HCT116 (cell line): ENCODE measurements at regions of chr7 and their contacts with region 1.

Region 1: DNA sequence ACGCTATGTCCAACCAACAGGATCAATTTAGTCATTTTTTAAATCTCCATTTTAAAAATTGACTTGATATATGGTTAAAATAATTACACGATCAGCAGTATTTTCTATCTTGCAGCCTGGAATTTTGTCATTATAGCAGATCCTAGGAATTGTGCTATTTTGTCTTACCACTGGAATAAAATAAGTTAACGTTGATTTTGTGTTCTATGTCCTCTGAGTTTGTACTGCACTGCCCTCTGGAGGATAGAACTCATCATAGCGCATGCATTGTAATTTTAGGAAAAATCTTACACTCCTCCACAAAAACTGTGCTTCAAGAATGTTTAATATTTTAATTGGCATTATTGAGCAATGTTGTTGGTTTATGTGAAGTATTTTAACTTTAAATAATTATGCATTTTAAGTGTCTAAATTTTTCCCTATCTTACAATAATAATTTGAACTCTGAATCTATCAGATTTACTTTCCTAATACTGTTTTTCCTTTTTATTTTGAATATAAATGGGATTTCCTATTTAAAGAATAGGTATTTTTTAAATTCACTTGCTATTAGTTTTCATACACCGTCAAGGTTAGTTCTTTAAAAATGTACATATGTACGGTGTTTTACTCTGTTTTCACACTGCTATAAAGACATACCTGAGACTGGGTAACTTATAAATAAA is 220.1 kb downstream of the PPP1R3A start:
- DNase-seq: peak; percentile 23
- ATAC-seq: 0 out of 2 replicates have a peak, but pooled peaks have one; percentile 57
- H3K4me3 ChIP-seq: no peak overlapping the region
- H3K27ac ChIP-seq: no peak overlapping the region
- H3K4me1 ChIP-seq: no peaks in the 10 kb centered on the region
- H3K27me3 ChIP-seq: no peaks in the 10 kb centered on the region
- CTCF ChIP-seq: peak; percentile 47 to 83 (median 74); a peak in 5 of 6 replicates
- POLR2A ChIP-seq: no peak
- RAD21 ChIP-seq: peak; percentile 73

Region 2: DNA sequence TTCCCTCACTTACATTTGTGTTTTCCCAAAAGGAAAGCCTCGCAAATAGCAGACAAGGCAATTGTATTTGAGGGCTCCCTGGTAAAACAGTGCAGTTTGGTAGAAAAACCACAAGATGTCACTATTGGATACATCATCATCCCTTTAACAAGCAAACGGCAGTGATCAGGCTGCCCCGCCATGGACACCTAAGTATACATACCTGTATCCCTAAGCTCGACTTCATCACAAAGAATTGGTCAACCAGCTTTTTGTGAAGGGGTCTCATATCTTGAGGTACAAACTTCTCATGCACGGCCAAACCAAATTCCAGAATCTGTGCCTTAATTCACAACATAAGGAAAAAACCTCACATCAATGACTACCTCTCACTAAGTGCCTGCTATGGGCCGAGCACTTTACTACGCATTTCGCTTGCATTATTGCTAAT is 1956.9 kb before region 1 on chr7:
- CTCF ChIA-PET with region 1: no interaction called
- POLR2A ChIA-PET with region 1: no interaction called
- RAD21 ChIA-PET with region 1: no interaction called
- intact Hi-C with region 1: loop called (anchors 5 kb)
- DNase-seq: peak; percentile 75
- ATAC-seq: peak; percentile 96
- H3K4me3 ChIP-seq: no peak overlapping the region
- H3K27ac ChIP-seq: no peak overlapping the region
- H3K4me1 ChIP-seq: no peaks in the 10 kb centered on the region
- H3K27me3 ChIP-seq: no peaks in the 10 kb centered on the region
- CTCF ChIP-seq: peak; percentile 60 to 86 (median 81)
- POLR2A ChIP-seq: no peak
- RAD21 ChIP-seq: peak; percentile 85

Region 3: GRCh38 chr7:112550468-112551060 is 1148.1 kb before region 1 on chr7:
- CTCF ChIA-PET with region 1: no interaction called
- POLR2A ChIA-PET with region 1: no interaction called
- RAD21 ChIA-PET with region 1: no interaction called
- intact Hi-C with region 1: loop called (anchors 2 kb)
- DNase-seq: peak; percentile 56
- ATAC-seq: peak; percentile 89
- H3K4me3 ChIP-seq: no peak overlapping the region
- H3K27ac ChIP-seq: no peak overlapping the region
- H3K4me1 ChIP-seq: no peaks in the 10 kb centered on the region
- H3K27me3 ChIP-seq: no peaks in the 10 kb centered on the region
- CTCF ChIP-seq: peak; percentile 74 to 96 (median 84)
- POLR2A ChIP-seq: no peak
- RAD21 ChIP-seq: peak; percentile 92

Region 4: DNA sequence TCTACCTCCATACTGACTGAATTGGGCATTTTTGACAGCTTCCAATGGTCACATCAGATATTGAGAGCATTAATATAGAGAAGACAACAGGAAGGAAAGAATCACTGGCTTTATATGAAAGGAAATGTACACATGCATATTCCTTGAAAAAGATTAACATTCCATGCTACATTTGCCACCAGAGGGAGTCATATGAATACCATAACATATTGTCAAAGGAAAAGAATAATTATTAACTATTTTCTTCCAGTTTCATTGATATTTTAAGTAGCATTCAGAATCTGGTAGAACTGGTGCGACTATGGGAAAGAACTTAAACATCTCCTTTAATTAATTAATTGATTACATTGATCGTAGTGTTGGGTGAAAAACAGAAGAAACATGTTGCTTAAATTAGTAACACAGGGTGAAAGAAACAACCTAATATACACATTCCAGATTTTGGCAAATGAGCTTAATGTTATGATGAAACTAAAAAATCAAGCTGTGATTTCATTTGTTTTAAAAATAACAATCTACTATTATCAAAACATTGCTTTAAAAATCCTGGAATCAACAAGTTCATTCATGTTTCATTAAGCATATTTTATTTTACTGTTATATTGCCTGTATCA is 683.5 kb before region 1 on chr7:
- CTCF ChIA-PET with region 1: interaction called, 3 read pairs
- POLR2A ChIA-PET with region 1: no interaction called
- RAD21 ChIA-PET with region 1: no interaction called
- intact Hi-C with region 1: loop called (anchors 2 kb)
- DNase-seq: peak; percentile 27
- ATAC-seq: peak; percentile 59; the same call in 1 of the 2 replicates
- H3K4me3 ChIP-seq: no peak overlapping the region
- H3K27ac ChIP-seq: no peak overlapping the region
- H3K4me1 ChIP-seq: no peaks in the 10 kb centered on the region
- H3K27me3 ChIP-seq: no peaks in the 10 kb centered on the region
- CTCF ChIP-seq: peak; percentile 33 to 68 (median 56); a peak in 5 of 6 replicates
- POLR2A ChIP-seq: no peak
- RAD21 ChIP-seq: peak; percentile 82

Region 5: GRCh38 chr7:113404245-113404644 is 294.4 kb before region 1 on chr7:
- CTCF ChIA-PET with region 1: interaction called, 9 read pairs
- POLR2A ChIA-PET with region 1: no interaction called
- RAD21 ChIA-PET with region 1: no interaction called
- intact Hi-C with region 1: loop called (anchors 1 kb)
- DNase-seq: peak; percentile 29
- ATAC-seq: peak; percentile 87
- H3K4me3 ChIP-seq: no peak overlapping the region
- H3K27ac ChIP-seq: no peak overlapping the region
- H3K4me1 ChIP-seq: no peaks in the 10 kb centered on the region
- H3K27me3 ChIP-seq: no peaks in the 10 kb centered on the region
- CTCF ChIP-seq: peak; percentile 40 to 55 (median 43); a peak in 5 of 6 replicates
- POLR2A ChIP-seq: no peak
- RAD21 ChIP-seq: peak; percentile 58

Region 6: GRCh38 chr7:113421696-113422330 is 276.9 kb before region 1 on chr7:
- CTCF ChIA-PET with region 1: interaction called, 3 read pairs
- POLR2A ChIA-PET with region 1: no interaction called
- RAD21 ChIA-PET with region 1: no interaction called
- intact Hi-C with region 1: loop called (anchors 5 kb)
- DNase-seq: peak; percentile 88
- ATAC-seq: peak; percentile 100
- H3K4me3 ChIP-seq: no peak overlapping the region
- H3K27ac ChIP-seq: no peak overlapping the region
- H3K4me1 ChIP-seq: no peaks in the 10 kb centered on the region
- H3K27me3 ChIP-seq: no peaks in the 10 kb centered on the region
- CTCF ChIP-seq: peak; percentile 85 to 96 (median 89)
- POLR2A ChIP-seq: no peak
- RAD21 ChIP-seq: peak; percentile 82

Region 7: DNA sequence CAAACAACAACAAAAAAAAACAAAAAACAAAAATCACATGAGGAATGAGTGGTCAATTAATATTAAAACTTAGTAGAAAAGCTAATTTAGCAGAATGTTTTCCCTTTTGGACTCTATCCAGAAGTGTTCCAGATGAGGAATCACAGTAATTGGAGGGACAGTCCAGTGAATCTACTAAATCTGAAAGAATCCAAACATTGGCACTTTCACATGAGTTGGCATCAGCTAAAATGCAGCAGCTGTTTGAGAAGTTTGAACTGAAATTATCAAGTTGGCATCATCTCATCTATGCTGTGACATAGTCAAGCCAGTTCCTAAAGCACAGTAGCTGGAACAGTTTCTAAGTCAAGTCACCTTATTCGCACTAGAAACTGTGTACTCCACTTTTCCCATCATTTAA is 147.7 kb before region 1 on chr7:
- CTCF ChIA-PET with region 1: no interaction called
- POLR2A ChIA-PET with region 1: no interaction called
- RAD21 ChIA-PET with region 1: no interaction called
- intact Hi-C with region 1: no loop called
- DNase-seq: no peak
- ATAC-seq: no peak
- H3K4me3 ChIP-seq: no peak overlapping the region
- H3K27ac ChIP-seq: no peak overlapping the region
- H3K4me1 ChIP-seq: no peaks in the 10 kb centered on the region
- H3K27me3 ChIP-seq: no peaks in the 10 kb centered on the region
- CTCF ChIP-seq: no peak
- POLR2A ChIP-seq: no peak
- RAD21 ChIP-seq: no peak

Region 8: DNA sequence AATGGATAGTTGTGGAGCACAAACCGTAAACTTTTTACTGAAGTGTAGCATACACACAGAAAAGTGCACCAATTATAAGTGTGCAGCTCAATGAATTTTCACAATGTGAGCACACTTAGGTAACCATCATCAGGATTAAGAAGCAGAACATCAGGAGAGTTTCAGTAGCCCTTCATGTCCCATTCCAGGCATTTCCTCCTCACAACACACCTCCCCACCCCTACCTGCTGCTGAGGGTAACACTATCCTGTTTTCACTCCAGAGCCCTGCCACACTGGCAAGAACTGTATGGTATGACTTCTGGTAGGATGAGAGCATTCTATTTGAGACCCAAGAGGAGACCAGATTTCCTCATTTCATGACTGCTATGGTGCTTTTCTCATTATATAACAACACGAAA is 53.6 kb after region 1 on chr7:
- CTCF ChIA-PET with region 1: no interaction called
- POLR2A ChIA-PET with region 1: no interaction called
- RAD21 ChIA-PET with region 1: no interaction called
- intact Hi-C with region 1: loop called (anchors 10 kb)
- DNase-seq: no peak
- ATAC-seq: peak; percentile 55; the same call in 1 of the 2 replicates
- H3K4me3 ChIP-seq: no peak overlapping the region
- H3K27ac ChIP-seq: no peak overlapping the region
- H3K4me1 ChIP-seq: no peaks in the 10 kb centered on the region
- H3K27me3 ChIP-seq: no peaks in the 10 kb centered on the region
- CTCF ChIP-seq: 0 out of 6 replicates have a peak, but pooled peaks of 2 of the 3 experiments have one; percentile 12
- POLR2A ChIP-seq: no peak
- RAD21 ChIP-seq: no peak